Activated CD8-positive, alpha-beta T cell treated with anti-CD3 and anti-CD28 coated beads for 36 hours (primary cell): ENCODE measurements at regions of chr19 and their contacts with region 1.

Region 1: DNA sequence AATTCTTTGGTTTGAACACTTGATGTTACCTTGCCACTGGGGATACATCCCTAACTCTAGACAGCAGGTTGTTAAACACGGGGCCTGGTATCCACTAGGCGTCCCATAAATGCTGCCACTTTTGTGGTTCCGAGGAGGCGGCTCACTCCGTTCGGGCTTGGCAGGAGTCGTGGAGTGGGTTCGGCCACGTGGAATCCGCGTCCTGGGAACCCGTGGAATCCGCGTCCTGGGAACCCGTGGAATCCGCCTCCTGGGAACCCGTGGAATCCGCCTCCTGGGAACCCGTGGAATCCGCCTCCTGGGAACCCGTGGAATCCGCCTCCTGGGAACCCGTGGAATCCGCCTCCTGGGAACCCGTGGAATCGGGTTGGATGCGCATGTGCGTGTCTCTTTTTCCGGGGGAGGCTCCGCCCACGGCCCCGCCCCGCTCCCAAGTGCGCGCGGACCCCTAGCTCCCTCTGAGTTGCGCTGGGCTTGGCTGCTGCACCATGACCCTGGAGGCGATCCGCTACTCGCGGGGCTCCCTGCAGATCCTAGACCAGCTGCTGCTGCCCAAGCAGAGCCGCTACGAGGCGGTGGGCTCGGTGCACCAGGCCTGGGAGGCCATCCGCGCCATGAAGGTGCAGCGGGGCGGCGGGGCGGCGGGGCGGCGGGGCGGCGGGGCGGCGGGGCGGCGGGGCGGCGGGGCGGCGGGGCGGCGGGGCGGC is at the start of gene MRI1:
- DNase-seq: peak; percentile 78
- ATAC-seq: peak; percentile 87
- H3K4me3 Mint-ChIP-seq: peak within 1 kb of the TSS; percentile 84
- H3K27ac Mint-ChIP-seq: peak within 1 kb of the TSS; percentile 75
- H3K4me1 Mint-ChIP-seq: peaks cover 11% of the 10 kb centered on the region
- H3K27me3 Mint-ChIP-seq: no peaks in the 10 kb centered on the region
- CTCF ChIP-seq: no peak
- total RNA-seq, gene MRI1: 37.1 to 40.8 TPM

Region 2: GRCh38 chr19:13748169-13748828 is 16.0 kb before region 1 on chr19:
- CTCF ChIA-PET with region 1: interaction called, 5 read pairs
- POLR2A ChIA-PET with region 1: interaction called, 10 read pairs
- intact Hi-C with region 1: no loop called
- DNase-seq: peak; percentile 42
- ATAC-seq: no peak
- H3K4me3 Mint-ChIP-seq: peak overlapping the region; percentile 93
- H3K27ac Mint-ChIP-seq: peak overlapping the region; percentile 90
- H3K4me1 Mint-ChIP-seq: peaks cover 22% of the 10 kb centered on the region
- H3K27me3 Mint-ChIP-seq: no peaks in the 10 kb centered on the region
- CTCF ChIP-seq: no peak